ENCODE measurements at regions of chr9 and their contacts with region 1.

Region 1: DNA sequence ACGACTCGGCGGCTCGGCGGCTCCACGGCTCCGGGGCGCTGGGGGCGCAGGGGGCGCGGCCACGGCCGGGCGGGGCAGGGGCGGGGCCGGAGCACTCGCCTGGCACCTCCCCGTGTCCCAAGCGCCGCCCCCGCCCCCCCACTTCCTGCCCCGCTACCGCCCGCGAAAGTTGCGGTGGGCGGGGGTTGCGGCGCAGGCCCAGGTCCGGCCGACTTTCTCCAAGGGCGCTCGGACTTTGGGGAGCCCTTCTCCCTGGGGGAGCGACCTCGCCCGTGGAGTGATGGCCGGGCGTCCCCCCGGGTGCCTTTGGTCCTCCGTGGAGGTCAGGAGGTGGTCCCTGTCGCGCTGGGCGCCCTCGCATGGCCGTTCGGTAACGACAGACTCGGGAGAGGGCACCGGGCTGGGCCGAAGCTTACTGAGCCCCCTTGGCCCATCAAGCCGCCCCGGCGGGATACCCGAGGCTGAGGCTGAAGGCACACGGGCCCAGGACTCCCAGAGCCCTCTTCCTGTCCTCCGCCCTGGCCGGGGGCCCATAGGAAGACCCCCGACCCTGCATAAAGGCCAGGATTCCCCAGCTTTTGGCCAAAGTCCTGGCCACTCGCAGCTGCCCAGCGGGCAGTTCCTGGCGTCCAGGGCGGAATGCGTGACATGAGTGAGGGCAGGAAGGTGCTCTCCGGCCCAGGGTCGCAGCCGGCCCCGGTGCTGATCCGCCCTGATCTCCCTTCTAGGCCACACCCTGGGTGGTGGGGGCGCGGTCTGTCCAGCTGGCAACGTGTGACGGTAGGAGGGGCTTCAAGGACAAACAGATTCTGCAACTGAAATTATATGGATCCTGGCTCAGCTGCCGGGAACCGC is 883 bp upstream of the VAV2 start:
- DNase-seq: peak; percentile 79
- ATAC-seq: peak; percentile 54
- H3K4me3 ChIP-seq: peak overlapping the region; percentile 70
- H3K27ac ChIP-seq: peak overlapping the region; percentile 36
- H3K4me1 ChIP-seq: peaks cover 13% of the 10 kb centered on the region
- H3K27me3 ChIP-seq: no peaks in the 10 kb centered on the region
- CTCF ChIP-seq: peak; percentile 61

Region 2: DNA sequence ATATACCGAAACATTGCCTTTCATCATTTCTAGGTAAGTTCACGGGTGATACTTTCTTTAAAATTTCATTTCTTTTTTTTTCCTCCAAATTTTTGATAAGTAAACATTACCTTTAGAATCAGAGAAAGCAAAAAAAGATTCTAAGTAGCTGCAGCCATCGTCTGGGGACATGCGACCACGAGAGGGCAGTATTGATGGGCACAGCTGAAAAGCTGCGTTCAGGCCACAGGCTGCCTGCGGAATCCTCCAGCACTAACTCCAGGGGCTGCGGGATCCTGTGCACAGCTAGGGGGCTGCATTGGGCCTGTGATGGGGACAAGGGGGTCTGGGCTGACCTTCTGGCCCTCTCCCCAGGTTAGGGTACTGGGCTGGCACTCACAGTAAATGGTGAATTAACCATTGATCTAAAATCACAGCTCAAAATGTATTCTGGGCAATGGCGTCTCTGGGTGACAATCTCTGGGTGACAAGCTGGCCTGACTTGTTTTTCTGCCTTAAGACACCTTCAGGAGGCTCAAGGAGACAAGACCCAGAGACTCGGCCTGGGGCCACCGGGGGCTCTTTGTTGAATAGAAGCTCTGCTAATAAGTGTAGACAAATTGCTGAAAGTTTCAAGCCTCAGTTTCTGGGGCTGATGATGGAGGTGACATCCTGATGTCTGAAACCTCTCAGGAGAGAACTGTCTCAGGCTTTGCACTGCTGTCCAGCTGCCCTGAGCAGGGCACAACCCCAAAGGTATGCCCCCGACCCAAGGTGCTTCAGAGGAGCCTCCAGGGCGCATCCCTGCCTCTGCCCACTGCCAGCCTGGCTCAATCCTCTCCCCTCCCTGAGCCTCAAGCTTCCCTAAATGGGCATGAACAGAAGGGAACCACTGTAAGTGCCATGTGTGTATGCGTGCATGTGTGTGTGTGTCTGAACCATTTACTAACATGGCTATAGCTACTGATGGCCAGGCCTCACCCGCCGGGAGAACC is 210.6 kb before region 1 on chr9:
- CTCF ChIA-PET with region 1: interaction called, 11 read pairs
- POLR2A ChIA-PET with region 1: no interaction called
- intact Hi-C with region 1: loop called (anchors 1 kb)
- DNase-seq: peak; percentile 64
- ATAC-seq: peak; percentile 74
- H3K4me3 ChIP-seq: no peak overlapping the region
- H3K27ac ChIP-seq: no peak overlapping the region
- H3K4me1 ChIP-seq: no peaks in the 10 kb centered on the region
- H3K27me3 ChIP-seq: no peaks in the 10 kb centered on the region
- CTCF ChIP-seq: peak; percentile 77

Region 3: DNA sequence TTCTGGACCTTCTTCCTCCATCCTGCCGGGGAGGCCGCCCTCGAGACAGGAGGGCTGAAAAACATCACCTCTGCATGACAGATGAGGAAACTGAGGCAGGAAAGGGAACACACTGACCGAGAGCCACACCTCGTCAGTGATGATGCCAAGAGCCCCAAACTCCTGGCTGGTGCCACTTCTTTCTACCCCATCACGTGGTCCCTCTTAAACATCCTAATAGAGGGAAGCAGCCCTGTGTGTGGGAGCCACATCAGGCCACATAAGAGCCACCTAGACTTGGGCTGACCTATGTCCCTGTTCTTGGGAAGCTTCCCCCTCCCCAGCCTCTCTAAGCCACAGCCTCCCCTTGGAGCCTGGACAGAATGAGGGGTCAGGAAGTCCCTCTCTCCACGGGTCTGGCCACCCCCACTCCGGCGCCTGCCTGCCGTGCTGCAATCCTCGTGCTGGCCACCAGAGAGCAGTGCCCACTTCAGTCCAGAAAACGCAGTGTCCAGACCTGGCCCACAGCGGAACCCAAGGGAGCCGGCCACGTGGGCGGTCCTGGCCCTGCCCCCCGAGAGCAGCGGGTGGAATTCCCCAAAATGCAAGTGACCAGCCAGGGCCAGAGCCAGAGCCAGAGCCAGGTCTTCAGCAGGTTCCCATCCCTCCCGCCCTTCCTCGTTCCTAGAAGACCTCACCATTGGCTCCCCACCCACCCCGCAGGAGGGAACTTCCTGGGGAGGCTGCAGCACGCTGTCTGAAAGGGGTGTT is 200.1 kb before region 1 on chr9:
- CTCF ChIA-PET with region 1: no interaction called
- POLR2A ChIA-PET with region 1: no interaction called
- intact Hi-C with region 1: loop called (anchors 1 kb)
- DNase-seq: peak; percentile 49
- ATAC-seq: peak; percentile 84
- H3K4me3 ChIP-seq: no peak overlapping the region
- H3K27ac ChIP-seq: no peak overlapping the region
- H3K4me1 ChIP-seq: no peaks in the 10 kb centered on the region
- H3K27me3 ChIP-seq: no peaks in the 10 kb centered on the region
- CTCF ChIP-seq: peak; percentile 72

Region 4: DNA sequence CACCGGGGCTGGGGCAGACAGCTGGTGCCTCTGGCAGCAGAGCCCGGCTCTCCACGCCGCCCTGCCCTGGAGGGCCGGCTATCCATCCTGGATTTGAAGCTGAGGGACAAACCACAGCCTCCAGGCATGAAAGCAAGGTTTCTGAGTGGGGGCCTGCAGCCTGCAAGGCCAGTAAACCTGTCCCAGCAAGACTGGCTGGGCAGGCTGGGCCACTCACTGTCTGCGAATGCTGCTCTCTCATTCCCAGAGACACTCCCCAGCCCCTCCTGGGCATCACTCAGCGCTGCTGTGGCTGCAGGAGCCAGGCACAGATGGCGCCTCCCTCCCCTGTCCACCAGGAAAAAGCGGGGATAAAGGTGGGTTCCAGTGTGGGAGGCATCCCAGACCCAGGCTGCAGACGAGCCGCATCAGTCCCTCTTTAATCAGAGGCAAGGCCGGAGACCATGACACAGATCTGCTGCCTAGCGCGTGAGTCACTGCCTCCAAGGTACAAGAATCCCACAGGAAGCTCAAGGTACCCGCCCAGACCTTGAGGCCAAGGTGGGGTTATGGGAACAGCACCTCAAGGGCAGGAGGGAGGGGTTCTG is 118.9 kb before region 1 on chr9:
- CTCF ChIA-PET with region 1: no interaction called
- POLR2A ChIA-PET with region 1: no interaction called
- intact Hi-C with region 1: loop called (anchors 2 kb)
- DNase-seq: peak; percentile 92
- ATAC-seq: peak; percentile 87
- H3K4me3 ChIP-seq: peak overlapping the region; percentile 56
- H3K27ac ChIP-seq: peak overlapping the region; percentile 100
- H3K4me1 ChIP-seq: peaks cover 25% of the 10 kb centered on the region
- H3K27me3 ChIP-seq: no peaks in the 10 kb centered on the region
- CTCF ChIP-seq: no peak

Region 5: DNA sequence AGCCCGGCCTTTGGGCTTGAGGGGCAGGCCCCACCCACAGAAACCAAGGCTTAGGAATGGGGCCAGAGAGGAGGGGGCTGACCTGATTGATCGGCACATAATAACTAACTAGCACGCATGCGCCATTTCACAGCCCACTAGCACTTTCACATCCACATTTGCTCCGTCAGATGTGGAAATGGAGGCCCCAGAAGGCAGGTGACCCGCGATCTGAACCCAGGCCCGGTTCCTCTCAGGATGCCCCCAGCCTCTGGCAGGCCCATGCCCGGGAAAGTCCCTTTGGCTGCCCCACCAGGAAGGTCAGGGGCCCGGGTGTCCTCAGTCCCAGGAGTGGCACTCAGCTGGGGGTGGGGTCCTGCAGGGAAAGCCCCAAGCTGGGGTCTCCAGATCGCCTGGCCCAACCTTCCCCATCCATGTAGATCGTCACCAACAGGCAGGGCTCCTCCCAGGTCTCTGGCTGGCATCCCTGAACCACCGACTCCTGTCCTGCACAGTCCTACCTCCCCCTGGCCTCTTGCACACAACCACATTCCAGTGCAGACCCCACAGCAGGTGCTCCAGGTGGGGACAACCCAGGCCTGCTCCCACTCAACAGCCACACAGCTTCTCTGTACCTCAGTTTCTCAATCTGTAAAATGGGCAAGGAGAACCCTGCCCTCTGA is 47.6 kb before region 1 on chr9:
- CTCF ChIA-PET with region 1: no interaction called
- POLR2A ChIA-PET with region 1: no interaction called
- intact Hi-C with region 1: loop called (anchors 2 kb)
- DNase-seq: no peak
- ATAC-seq: no peak
- H3K4me3 ChIP-seq: no peak overlapping the region
- H3K27ac ChIP-seq: peak overlapping the region; percentile 52
- H3K4me1 ChIP-seq: peaks cover 16% of the 10 kb centered on the region
- H3K27me3 ChIP-seq: no peaks in the 10 kb centered on the region
- CTCF ChIP-seq: no peak

Region 6: DNA sequence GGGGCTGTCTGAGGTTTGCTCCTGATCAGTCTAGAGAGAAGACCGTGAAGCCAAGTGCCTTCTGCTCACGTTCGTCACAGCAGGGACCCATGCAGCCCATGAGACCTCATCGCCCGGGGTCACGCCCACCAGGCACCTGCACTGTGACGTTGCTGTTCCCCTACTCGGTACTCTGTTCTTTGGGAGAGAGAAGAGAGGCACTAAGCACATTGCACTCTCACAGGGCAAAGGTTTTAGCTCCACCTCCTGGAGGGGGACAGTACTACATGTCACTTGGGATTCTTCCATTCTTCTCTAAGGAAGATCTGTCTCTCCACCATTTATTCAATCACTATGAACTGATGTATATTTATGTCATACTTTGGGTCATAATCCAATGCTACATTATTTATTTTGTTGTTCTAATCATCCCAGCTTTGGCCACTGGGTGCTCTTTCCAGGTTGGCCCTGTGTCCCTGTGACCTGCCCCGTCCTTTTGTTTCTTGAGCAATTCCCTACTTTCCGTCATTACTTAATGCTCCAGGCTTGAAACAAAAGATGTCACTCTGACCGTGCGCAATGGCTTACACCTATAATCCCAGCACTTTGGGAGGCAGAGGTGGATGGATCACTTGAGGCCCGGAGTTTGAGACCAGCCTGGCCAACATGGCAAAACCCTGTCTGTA is 106.2 kb after region 1 on chr9:
- CTCF ChIA-PET with region 1: no interaction called
- POLR2A ChIA-PET with region 1: no interaction called
- intact Hi-C with region 1: loop called (anchors 1 kb)
- DNase-seq: peak; percentile 75
- ATAC-seq: peak; percentile 67
- H3K4me3 ChIP-seq: no peak overlapping the region
- H3K27ac ChIP-seq: no peak overlapping the region
- H3K4me1 ChIP-seq: no peaks in the 10 kb centered on the region
- H3K27me3 ChIP-seq: peaks cover 13% of the 10 kb centered on the region
- CTCF ChIP-seq: peak; percentile 80